ENCODE measurements at regions of chr7 and their contacts with region 1.

Region 1: DNA sequence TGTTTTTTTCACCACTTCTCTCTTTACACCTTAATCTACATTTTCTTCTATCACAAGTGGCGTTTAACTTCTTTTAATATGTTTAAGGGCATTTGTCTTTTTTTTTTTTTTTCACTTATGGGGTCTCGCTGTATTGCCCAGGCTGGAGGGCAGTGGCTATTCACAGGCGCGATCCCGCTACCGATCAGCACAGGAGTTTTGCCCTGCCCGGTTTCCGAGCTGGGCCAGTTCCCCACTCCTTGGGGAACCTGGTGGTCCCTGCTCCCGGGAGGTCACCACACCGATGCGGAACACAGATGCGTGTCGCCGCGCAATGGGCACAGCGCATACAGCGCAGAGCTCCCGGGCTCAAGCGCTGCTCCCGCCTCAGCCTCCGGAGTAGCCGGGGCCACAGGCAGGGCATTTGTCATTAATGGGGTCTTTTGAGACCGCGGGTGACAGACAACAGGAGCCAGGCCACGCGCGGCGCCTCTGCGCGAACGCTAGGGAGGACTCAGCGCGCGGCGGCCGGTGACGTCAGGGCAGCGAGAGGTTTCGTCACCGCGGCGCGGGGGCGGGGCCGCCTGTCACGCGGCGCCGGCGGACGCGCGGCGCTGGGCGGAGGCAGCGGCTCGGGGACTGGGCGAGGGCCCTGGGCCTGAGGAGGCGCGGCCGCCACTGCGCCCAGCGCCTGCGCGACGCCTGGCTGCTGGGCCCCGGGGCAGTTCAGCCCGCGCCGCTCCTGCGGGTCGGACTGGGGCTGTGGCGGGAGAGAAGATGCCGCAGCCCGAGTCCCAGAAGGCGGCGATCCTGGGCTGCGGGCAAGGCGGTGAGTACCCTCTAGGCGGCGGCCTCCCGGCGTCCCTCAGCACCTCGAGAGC is at the start of gene GALNT11:
- DNase-seq: peak; percentile 91 to 96
- ATAC-seq: peak; percentile 99
- H3K4me3 ChIP-seq: peak within 1 kb of the TSS; percentile 74 to 97
- H3K27ac ChIP-seq: peak within 1 kb of the TSS in 1 of 2 donors; percentile 6
- H3K4me1 ChIP-seq: no peaks in the 10 kb centered on the region
- H3K27me3 ChIP-seq: no peaks in the 10 kb centered on the region
- total RNA-seq, gene GALNT11: 25.3 to 45.8 TPM

Region 2: GRCh38 chr7:151795168-151795811 is 230.0 kb before region 1 on chr7:
- intact Hi-C with region 1: no loop called
- DNase-seq: peak; percentile 52 to 72
- ATAC-seq: no peak
- H3K4me3 ChIP-seq: no peak overlapping the region
- H3K27ac ChIP-seq: no peak overlapping the region
- H3K4me1 ChIP-seq: no peaks in the 10 kb centered on the region
- H3K27me3 ChIP-seq: no peaks in the 10 kb centered on the region

Region 3: DNA sequence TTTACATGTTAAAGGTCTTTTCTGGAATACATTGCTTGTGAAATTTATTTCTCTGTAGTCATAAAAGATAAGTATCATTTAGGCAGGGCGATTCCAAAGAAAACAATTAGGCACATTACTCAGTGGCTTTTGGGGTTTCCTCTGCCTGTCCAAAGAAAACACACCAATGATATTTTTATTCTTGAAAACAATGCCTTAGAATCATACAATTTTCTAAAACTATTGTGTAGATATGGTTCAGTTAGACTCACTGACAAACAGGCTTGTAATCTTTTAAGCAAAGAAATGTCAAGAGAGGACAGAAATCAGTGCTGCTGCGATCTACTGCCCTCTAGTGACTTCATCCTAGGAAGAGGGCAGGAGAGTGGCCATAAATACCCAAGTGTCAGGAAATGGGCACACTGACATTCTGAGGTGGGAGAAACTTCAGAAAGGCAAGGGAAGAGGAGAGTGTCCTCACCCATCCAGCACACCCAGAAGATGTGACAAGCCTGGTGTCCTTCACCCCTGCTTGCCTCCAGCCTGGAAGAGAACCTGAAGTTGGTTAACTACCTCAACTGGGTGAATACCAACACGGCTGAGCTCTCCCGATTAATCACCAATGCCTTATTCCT is 120.7 kb after region 1 on chr7:
- intact Hi-C with region 1: loop called in 1 of 2 experiments (anchors 5 kb)
- DNase-seq: no peak
- ATAC-seq: peak; percentile 77
- H3K4me3 ChIP-seq: no peak overlapping the region
- H3K27ac ChIP-seq: peak overlapping the region in 1 of 2 donors; percentile 58
- H3K4me1 ChIP-seq: peaks cover 2 to 3% of the 10 kb centered on the region in 2 donors
- H3K27me3 ChIP-seq: no peaks in the 10 kb centered on the region